A673 (cell line): ENCODE measurements at regions of chr1 and their contacts with region 1.

Region 1: DNA sequence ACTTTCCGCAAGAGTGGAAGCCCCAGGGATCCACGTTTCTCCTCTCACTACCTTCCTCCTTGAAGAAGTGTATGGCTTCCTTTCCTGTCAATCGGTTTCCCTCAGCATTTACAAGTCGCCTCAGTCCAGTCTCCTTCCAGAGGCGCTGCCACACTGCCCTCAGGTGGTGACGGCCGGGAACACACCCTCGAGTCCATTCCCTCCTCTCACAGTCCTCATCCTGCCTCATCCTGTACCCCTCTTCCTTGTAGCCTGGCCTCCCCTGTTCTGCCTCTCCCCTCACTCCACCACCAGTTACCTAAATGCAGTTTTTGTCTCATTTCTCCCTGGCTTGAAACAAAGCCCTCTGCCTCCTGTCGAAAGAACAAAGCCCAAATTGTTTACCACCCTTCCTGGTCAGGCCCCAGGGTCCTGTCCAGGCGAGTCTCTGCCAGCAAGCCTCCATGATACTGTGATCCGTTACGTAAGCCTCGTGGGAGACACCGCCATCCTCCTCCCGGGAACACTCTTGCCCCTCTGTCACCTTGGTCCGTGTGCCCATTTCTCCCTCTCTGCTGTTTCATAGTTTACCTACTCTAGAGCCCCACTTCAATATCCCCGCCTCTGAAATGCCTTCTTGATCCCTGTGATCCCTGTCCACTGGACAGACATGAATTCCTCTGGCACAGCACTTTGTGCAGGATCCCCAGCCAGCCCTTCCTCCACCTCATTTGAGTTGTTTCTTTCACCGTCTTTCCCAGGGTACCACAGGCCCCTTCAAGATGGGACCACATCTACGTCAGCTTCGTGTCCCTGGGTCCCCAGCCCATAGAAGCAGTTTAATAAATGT is 23.3 kb upstream of the LSM10 start:
- DNase-seq: peak; percentile 90
- H3K4me3 ChIP-seq: no peak overlapping the region
- H3K27ac ChIP-seq: no peak overlapping the region
- H3K4me1 ChIP-seq: peaks cover 5% of the 10 kb centered on the region
- H3K27me3 ChIP-seq: no peaks in the 10 kb centered on the region
- CTCF ChIP-seq: peak; percentile 94

Region 2: GRCh38 chr1:36306902-36307456 is 114.1 kb before region 1 on chr1:
- CTCF ChIA-PET with region 1: no interaction called
- POLR2A ChIA-PET with region 1: no interaction called
- intact Hi-C with region 1: loop called (anchors 10 kb)
- DNase-seq: peak; percentile 95
- H3K4me3 ChIP-seq: peak overlapping the region; percentile 53
- H3K27ac ChIP-seq: peak overlapping the region; percentile 70
- H3K4me1 ChIP-seq: no peaks in the 10 kb centered on the region
- H3K27me3 ChIP-seq: no peaks in the 10 kb centered on the region
- CTCF ChIP-seq: no peak

Region 3: DNA sequence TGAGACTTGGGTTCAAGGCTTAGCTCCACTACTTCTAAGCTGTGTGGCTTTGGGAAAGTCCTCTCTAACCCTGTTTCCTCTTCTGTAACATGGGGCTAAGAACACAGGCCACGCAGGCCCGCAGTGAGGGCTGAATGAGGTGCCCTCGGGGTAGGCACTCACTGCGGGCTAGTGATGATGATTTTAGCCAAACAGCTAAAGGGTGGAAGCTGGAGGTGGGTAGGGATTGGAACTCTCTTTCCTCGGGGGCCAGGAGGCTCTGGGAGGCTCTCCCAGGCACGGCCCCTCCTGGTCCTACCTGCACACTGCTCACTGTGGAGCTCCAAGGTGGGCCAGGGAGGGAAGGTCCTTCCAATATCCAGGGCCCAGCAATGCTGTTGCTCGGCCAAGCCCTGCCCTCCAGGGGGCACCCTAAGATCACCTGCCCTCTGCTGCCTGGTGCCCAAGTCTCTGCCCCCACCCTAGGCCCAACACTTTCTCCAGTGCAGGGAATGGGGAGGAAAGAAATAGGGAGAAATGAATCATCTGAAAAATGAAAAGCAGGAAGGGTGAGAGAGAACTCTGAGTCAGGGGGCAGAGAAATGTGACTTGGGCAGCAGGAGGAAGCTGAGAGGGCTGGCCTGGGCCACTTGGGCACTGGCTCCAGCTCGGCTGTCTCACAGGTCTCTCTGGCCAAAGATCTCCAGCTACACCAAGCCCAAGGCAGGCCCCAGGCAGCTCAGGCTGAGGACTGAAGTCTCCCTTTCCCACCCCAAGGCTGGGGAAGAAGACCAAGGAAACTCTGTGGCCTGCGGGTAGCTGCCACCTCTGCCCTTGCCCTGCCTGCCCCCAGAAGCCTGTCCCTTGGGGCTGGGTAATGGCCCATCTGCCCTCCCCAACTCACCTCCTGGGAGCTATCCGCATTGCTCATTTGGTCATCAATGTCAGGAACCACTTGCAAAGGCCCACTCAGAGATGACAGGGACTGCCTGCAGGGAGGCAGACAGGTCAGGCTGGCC is 78.3 kb before region 1 on chr1:
- CTCF ChIA-PET with region 1: no interaction called
- POLR2A ChIA-PET with region 1: no interaction called
- intact Hi-C with region 1: loop called (anchors 2 kb)
- DNase-seq: no peak
- H3K4me3 ChIP-seq: no peak overlapping the region
- H3K27ac ChIP-seq: no peak overlapping the region
- H3K4me1 ChIP-seq: no peaks in the 10 kb centered on the region
- H3K27me3 ChIP-seq: no peaks in the 10 kb centered on the region
- CTCF ChIP-seq: peak; percentile 51

Region 4: DNA sequence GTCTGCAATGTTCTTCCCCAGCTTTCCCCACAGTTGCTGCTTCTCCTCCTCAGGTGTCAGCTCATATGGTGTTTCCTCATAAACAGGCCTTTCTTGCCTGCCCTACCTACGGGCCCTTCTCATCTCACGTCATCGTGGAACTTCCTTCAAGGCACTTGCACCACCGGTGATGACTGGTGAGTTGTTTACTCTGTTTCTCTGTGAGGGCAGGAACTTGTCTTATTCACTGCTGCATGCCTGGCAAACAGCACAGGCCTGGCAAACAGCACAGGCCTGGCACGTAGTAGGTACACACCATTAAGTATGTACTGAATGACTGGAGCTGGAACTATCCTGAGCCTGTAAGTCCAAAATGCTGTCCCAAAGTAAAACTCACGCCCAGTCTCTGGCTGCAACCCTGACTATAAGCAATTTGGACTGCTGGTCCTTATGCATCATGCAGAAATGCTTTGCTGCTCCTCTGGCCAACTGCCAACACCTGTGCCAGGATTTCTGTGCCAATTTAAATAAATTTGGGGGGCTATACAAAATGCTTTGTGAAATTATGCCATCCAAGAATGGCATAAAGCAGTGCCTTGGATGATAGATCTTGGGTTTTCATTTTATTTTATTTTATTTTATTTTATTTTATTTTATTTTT is 61.0 kb before region 1 on chr1:
- CTCF ChIA-PET with region 1: no interaction called
- POLR2A ChIA-PET with region 1: no interaction called
- intact Hi-C with region 1: no loop called
- DNase-seq: no peak
- H3K4me3 ChIP-seq: no peak overlapping the region
- H3K27ac ChIP-seq: peak overlapping the region; percentile 37
- H3K4me1 ChIP-seq: peaks cover 4% of the 10 kb centered on the region
- H3K27me3 ChIP-seq: no peaks in the 10 kb centered on the region
- CTCF ChIP-seq: no peak

Region 5: DNA sequence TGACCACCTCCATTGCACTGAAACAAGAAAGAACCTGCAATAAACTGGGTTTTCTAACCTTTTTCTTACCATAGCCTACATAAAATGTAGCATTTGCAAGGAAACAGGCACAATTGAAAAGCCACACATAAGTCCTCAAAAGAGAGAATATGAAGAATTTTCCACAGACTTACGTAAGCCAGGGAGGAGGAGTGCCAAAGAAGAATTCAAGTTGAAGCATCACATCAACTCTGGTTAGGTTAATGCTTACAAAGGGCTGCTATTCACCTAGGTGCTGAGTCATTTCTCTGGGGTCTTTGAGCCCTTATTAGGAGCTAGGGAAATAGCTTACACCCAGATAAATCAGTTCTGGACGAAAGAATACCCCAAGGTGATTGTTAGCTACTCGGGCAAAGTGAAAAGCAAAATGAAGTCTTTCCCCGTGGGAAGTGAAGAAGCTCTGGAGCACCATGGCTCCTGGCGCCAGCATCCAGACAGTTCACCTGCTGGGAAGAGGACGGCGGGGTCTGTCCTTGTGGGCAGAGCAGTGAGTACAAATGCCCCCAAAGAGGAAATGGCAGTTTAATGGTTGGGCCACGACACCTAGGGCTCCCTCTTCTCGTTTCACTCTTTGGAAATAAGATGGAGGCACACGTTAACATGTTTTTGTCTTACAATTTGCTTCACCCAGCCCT is 19.7 kb after region 1 on chr1:
- CTCF ChIA-PET with region 1: interaction called, 12 read pairs
- POLR2A ChIA-PET with region 1: no interaction called
- intact Hi-C with region 1: no loop called
- DNase-seq: no peak
- H3K4me3 ChIP-seq: no peak overlapping the region
- H3K27ac ChIP-seq: no peak overlapping the region
- H3K4me1 ChIP-seq: no peaks in the 10 kb centered on the region
- H3K27me3 ChIP-seq: no peaks in the 10 kb centered on the region
- CTCF ChIP-seq: no peak